ENCODE measurements at regions of chr6 and their contacts with region 1.

Region 1: GRCh38 chr6:125779924-125780539 is 10.7 kb upstream of the NCOA7 start:
- DNase-seq: peak; percentile 78 to 94 (median 85)
- ATAC-seq: peak; percentile 77
- H3K4me3 ChIP-seq: peak overlapping the region; percentile 68 to 73
- H3K4me3 Mint-ChIP-seq: no peak overlapping the region
- H3K27ac ChIP-seq: peak overlapping the region; percentile 84 to 90
- H3K27ac Mint-ChIP-seq: no peak overlapping the region
- H3K4me1 ChIP-seq: peaks cover 13% of the 10 kb centered on the region
- H3K4me1 Mint-ChIP-seq: peaks cover 11% of the 10 kb centered on the region
- H3K27me3 ChIP-seq: no peaks in the 10 kb centered on the region
- H3K27me3 Mint-ChIP-seq: no peaks in the 10 kb centered on the region
- CTCF ChIP-seq: peak; percentile 43

Region 2: DNA sequence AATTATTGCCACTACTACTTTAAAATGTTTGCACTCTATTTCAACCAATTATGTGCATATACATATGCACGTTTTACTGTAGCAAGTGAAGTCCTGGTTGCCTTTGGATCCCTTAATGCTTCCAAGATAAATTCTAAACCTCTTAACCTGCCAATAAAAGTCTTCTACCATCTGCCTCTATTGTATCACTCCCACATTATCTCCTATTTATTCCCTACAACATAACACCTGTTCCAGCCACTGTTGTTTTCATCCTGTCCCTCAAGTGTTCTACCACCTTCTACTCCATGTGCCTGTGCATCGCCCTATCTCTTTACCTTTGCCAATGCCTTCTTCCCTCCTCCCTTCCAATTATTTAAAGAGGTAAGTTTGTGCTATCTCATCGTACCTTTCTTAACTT is 1316.8 kb before region 1 on chr6:
- CTCF ChIA-PET with region 1: no interaction called
- POLR2A ChIA-PET with region 1: no interaction called
- intact Hi-C with region 1: no loop called
- DNase-seq: no peak
- ATAC-seq: no peak
- H3K4me3 ChIP-seq: no peak overlapping the region
- H3K4me3 Mint-ChIP-seq: no peak overlapping the region
- H3K27ac ChIP-seq: no peak overlapping the region
- H3K27ac Mint-ChIP-seq: no peak overlapping the region
- H3K4me1 ChIP-seq: no peaks in the 10 kb centered on the region
- H3K4me1 Mint-ChIP-seq: no peaks in the 10 kb centered on the region
- H3K27me3 ChIP-seq: no peaks in the 10 kb centered on the region
- H3K27me3 Mint-ChIP-seq: no peaks in the 10 kb centered on the region
- CTCF ChIP-seq: no peak

Region 3: DNA sequence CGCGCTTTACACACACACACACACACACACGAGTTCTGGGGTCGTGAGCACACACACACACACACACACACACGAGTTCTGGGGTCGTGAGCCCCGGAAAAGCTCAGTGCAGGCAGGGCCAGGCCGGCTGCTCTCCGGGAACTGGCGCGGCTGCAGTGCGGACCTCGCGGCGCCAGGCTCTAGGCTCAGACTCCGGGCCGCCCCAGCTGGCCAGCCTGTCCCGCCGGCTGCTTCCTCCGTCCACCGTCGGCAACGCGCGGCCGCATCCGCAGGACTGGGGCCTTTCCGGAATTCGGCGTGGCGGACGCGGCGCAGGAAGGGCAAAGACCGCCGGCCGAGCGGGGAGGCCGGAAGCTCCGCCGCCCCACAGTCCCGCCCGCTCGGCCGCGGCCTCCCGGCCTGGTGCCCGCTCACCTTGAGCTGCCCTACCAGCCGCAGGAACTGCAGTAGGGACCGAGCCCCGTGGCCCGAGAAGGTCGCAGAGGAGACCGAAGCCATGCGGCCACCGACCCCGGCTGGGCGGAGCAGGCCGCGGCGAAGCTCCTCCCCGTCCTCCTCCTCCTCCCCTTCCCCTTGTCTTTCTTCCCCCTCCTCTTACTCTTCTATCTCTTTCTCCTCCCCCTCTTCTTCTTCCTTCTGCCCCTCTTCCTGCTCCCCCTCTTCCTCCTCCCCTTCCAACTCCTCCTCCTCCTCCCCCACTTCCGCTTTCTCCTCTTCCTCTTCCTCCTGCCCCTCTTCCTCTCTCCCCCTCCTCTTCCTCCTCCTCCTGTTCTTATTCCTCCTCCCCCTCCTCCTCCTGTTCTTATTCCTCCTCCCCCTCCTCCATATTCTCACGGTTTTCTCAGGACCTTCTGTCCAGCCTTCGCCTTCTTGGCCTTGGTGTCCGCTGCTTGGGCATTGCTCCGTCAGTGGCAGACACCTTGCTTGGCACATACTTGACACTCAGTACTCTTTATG is 478.3 kb before region 1 on chr6 and contains the start of gene HDDC2:
- CTCF ChIA-PET with region 1: interaction called, 4 read pairs
- POLR2A ChIA-PET with region 1: interaction called, 16 read pairs
- intact Hi-C with region 1: loop called in 1 of 2 experiments (anchors 5 kb)
- DNase-seq: peak in 8 of 9 experiments; percentile 27 to 67 (median 44)
- ATAC-seq: peak; percentile 43
- H3K4me3 ChIP-seq: peak within 1 kb of the TSS; percentile 65 to 70
- H3K4me3 Mint-ChIP-seq: peak within 1 kb of the TSS; percentile 82
- H3K27ac ChIP-seq: peak within 1 kb of the TSS; percentile 58 to 83
- H3K27ac Mint-ChIP-seq: peak within 1 kb of the TSS; percentile 88
- H3K4me1 ChIP-seq: peaks cover 39% of the 10 kb centered on the region
- H3K4me1 Mint-ChIP-seq: peaks cover 57% of the 10 kb centered on the region
- H3K27me3 ChIP-seq: no peaks in the 10 kb centered on the region
- H3K27me3 Mint-ChIP-seq: peaks cover 4% of the 10 kb centered on the region
- CTCF ChIP-seq: no peak
- total RNA-seq, gene HDDC2: 16.2 to 24.9 TPM

Region 4: DNA sequence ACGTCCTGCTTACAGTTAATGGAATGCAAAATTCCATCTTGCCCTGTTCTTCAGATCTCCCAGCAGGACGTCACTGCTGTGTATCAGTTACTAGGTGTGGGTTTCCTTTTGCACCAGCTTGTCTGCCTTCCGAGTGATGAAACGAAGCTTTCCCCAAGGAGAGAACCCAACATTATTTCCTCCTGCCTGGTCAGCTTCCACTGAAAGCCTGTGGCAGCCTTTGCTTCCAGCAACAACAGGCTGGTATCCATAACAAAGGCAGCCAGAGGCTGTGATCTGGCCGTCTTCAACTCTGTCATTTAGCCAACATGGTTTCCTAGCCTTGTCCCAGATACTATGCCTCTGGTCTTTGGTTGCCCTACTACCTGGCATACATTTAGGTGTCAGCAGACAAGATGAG is 109.5 kb before region 1 on chr6:
- CTCF ChIA-PET with region 1: no interaction called
- POLR2A ChIA-PET with region 1: no interaction called
- intact Hi-C with region 1: no loop called
- DNase-seq: no peak
- ATAC-seq: no peak
- H3K4me3 ChIP-seq: no peak overlapping the region
- H3K4me3 Mint-ChIP-seq: no peak overlapping the region
- H3K27ac ChIP-seq: no peak overlapping the region
- H3K27ac Mint-ChIP-seq: no peak overlapping the region
- H3K4me1 ChIP-seq: no peaks in the 10 kb centered on the region
- H3K4me1 Mint-ChIP-seq: no peaks in the 10 kb centered on the region
- H3K27me3 ChIP-seq: peaks cover 0 to under 1% of the 10 kb centered on the region in 2 experiments
- H3K27me3 Mint-ChIP-seq: peaks cover 11% of the 10 kb centered on the region
- CTCF ChIP-seq: no peak

Region 5: GRCh38 chr6:125749173-125749864 is 30.7 kb before region 1 on chr6 and contains the start of gene HEY2:
- CTCF ChIA-PET with region 1: interaction called, 7 read pairs
- POLR2A ChIA-PET with region 1: interaction called, 12 read pairs
- intact Hi-C with region 1: loop called (anchors 2 to 5 kb)
- DNase-seq: peak; percentile 54 to 93 (median 77)
- ATAC-seq: peak; percentile 70
- H3K4me3 ChIP-seq: peak within 1 kb of the TSS; percentile 63 to 80
- H3K4me3 Mint-ChIP-seq: peak within 1 kb of the TSS; percentile 88
- H3K27ac ChIP-seq: peak within 1 kb of the TSS in 1 of 2 experiments; percentile 1
- H3K27ac Mint-ChIP-seq: peak within 1 kb of the TSS; percentile 72
- H3K4me1 ChIP-seq: peaks cover 30% of the 10 kb centered on the region
- H3K4me1 Mint-ChIP-seq: peaks cover 38% of the 10 kb centered on the region
- H3K27me3 ChIP-seq: peaks cover 12 to 14% of the 10 kb centered on the region in 2 experiments
- H3K27me3 Mint-ChIP-seq: peaks cover 57% of the 10 kb centered on the region
- CTCF ChIP-seq: no peak
- total RNA-seq, gene HEY2: 0.11 to 0.33 TPM

Region 6: DNA sequence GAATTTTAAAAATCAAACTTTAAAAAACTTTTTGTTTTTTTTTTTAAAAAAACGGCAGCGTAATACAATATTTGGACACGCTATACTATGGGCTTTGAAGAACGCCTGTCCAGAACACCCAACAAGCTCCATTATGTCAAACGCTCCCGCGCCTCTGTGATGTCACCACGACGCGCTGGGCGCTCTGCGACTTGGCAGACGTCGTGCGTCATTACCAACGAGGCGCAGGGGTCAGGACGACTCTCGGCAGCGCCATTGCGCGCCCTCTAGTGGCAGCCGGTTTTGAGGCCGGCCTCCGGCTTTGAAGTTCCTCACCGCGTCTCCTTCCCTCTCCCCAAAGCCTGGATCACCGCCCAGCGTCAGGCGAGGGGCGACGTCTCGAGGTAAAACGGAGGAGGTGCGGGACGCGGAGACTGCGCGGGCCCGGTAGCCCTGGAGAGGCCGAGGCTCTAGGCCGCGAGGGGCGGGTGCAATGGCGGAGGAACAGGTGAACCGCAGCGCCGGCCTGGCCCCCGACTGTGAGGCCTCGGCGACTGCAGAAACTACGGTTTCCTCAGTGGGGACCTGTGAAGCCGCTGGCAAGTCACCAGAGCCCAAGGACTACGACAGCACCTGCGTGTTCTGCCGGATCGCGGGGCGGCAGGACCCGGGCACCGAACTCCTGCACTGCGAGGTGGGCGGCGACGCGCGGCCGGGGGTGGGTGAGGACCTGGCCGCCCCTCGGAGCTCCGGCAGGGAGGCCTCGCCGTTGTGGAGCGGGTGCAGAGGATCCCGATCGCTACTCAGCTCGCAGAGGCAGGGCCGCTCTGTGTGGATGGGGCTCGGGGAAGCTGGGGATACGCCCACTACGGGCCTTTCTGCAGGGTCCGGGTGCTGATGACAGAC is 176.7 kb after region 1 on chr6 and contains the start of gene HINT3:
- CTCF ChIA-PET with region 1: interaction called, 22 read pairs
- POLR2A ChIA-PET with region 1: interaction called, 32 read pairs
- intact Hi-C with region 1: loop called (anchors 1 to 2 kb)
- DNase-seq: peak; percentile 95 to 99 (median 98)
- ATAC-seq: peak; percentile 88
- H3K4me3 ChIP-seq: peak within 1 kb of the TSS; percentile 79 to 93
- H3K4me3 Mint-ChIP-seq: no peak within 1 kb of the TSS
- H3K27ac ChIP-seq: peak within 1 kb of the TSS; percentile 97 to 98
- H3K27ac Mint-ChIP-seq: no peak within 1 kb of the TSS
- H3K4me1 ChIP-seq: peaks cover 26% of the 10 kb centered on the region
- H3K4me1 Mint-ChIP-seq: peaks cover 9% of the 10 kb centered on the region
- H3K27me3 ChIP-seq: no peaks in the 10 kb centered on the region
- H3K27me3 Mint-ChIP-seq: peaks cover 6% of the 10 kb centered on the region
- CTCF ChIP-seq: peak; percentile 96
- total RNA-seq, gene HINT3: 14.2 to 15.4 TPM

Region 7: GRCh38 chr6:125986300-125987025 is 206.4 kb after region 1 on chr6 and contains the start of gene TRMT11:
- CTCF ChIA-PET with region 1: interaction called, 3 read pairs
- POLR2A ChIA-PET with region 1: interaction called, 32 read pairs
- intact Hi-C with region 1: loop called in 1 of 2 experiments (anchors 1 kb)
- DNase-seq: peak; percentile 63 to 92 (median 79)
- ATAC-seq: peak; percentile 95
- H3K4me3 ChIP-seq: peak within 1 kb of the TSS; percentile 75 to 95
- H3K4me3 Mint-ChIP-seq: peak within 1 kb of the TSS; percentile 35
- H3K27ac ChIP-seq: peak within 1 kb of the TSS; percentile 77 to 84
- H3K27ac Mint-ChIP-seq: no peak within 1 kb of the TSS
- H3K4me1 ChIP-seq: peaks cover 31% of the 10 kb centered on the region
- H3K4me1 Mint-ChIP-seq: peaks cover 15% of the 10 kb centered on the region
- H3K27me3 ChIP-seq: no peaks in the 10 kb centered on the region
- H3K27me3 Mint-ChIP-seq: no peaks in the 10 kb centered on the region
- CTCF ChIP-seq: no peak
- total RNA-seq, gene TRMT11: 19.0 to 19.4 TPM

Region 8: DNA sequence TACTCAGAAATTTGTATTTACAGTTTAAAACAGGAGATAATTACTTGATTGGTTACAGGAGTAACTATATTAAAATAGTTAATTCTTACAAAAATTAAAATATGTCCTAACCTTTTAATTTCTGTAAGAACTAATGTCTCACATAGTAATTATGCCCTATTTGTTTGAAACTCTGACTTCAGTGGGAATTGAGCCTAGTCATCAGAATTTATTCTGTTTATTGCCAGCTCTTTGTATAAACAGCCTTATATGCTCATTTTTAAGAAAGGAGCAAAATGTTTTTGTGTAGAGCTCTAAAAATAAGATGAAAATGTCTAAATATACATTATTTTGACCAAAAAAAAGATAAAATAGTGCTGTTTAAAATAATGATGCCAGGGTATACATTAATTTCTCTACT is 227.8 kb after region 1 on chr6:
- CTCF ChIA-PET with region 1: no interaction called
- POLR2A ChIA-PET with region 1: no interaction called
- intact Hi-C with region 1: no loop called
- DNase-seq: no peak
- ATAC-seq: no peak
- H3K4me3 ChIP-seq: no peak overlapping the region
- H3K4me3 Mint-ChIP-seq: no peak overlapping the region
- H3K27ac ChIP-seq: no peak overlapping the region
- H3K27ac Mint-ChIP-seq: no peak overlapping the region
- H3K4me1 ChIP-seq: no peaks in the 10 kb centered on the region
- H3K4me1 Mint-ChIP-seq: peaks cover 3% of the 10 kb centered on the region
- H3K27me3 ChIP-seq: no peaks in the 10 kb centered on the region
- H3K27me3 Mint-ChIP-seq: no peaks in the 10 kb centered on the region
- CTCF ChIP-seq: no peak